ENCODE measurements at regions of chr12 and their contacts with region 1.

Region 1: DNA sequence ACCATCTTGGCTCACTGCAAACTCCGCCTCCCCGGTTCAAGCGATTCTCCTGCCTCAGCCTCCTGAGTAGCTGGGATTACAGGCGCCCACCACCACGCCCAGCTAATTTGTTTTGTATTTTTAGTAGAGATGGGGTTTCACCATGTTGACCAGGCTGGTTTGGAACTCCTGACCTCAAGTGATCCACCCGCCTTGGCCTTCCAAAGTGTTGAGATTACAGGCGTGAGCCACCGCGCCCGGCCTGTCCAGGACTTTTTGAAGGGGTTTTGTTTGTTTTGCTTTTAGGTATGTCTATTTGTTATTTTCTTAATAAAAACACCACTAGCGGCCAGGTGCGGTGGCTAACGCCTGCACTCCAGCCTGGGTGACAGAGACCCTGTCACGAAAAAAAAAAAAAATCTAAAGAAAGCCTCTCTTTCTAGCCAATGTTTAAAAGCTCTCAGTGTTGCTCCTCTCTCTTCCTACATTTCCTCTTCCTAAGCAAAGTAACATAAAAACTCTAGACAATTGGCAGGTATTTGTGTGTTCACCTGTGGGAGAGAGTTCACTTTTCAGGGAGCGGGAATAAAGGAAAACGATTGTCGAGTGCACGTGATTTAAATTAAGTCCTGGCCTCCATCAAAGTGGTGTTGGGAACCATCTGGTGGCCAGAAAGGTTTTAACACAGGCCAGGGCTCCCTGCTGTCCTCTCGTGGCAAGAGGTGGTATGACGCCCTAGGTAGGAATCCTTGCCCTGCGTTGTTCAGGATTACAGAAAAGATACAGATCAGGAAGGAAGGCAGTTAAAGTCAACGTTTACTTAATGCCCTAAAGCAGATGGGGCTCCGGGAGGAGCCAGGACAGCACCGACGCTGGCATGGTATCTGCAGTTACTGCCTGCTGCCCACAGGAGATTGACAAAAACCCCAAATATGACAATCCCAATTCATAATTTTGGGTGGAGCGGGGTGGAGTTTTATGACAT is 36.2 kb upstream of the ATP23 start:
- DNase-seq: peak; percentile 93
- H3K4me3 Mint-ChIP-seq: no peak overlapping the region
- H3K27ac Mint-ChIP-seq: peak overlapping the region; percentile 55
- H3K4me1 Mint-ChIP-seq: peaks cover 7% of the 10 kb centered on the region
- H3K27me3 Mint-ChIP-seq: peaks cover 50% of the 10 kb centered on the region
- CTCF ChIP-seq: peak; percentile 100

Region 2: DNA sequence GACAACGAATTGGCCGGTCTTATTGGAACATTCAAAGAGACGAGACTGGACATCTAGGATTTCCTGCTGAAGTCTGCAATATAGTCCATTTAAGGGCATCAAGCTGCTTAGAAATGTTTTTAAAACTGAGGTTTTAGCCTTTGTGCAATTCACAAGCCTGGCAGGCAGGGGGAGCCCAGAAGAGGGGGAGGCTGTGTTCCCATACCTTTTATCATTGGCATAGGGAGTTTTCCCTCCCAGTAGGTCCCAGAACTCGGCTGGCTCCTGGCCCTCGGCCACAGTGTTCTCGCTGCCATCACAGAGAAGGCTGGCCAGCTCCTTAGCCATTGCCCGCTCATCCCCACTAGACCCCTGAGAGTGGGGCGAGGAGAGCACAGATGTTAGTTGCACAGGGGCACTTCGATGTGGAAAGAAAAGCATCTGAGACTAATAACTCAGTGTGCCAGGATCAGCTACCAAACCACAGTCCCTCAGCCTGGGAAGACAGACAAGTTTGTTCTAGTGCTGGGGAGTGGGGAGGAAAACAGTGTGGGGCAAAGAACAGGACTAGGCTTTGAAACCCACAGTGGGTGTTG is 101.7 kb before region 1 on chr12:
- CTCF ChIA-PET with region 1: interaction called, 3 read pairs
- intact Hi-C with region 1: loop called (anchors 1 kb)
- DNase-seq: peak; percentile 60
- H3K4me3 Mint-ChIP-seq: no peak overlapping the region
- H3K27ac Mint-ChIP-seq: no peak overlapping the region
- H3K4me1 Mint-ChIP-seq: no peaks in the 10 kb centered on the region
- H3K27me3 Mint-ChIP-seq: no peaks in the 10 kb centered on the region
- CTCF ChIP-seq: peak; percentile 84

Region 3: GRCh38 chr12:57836442-57837375 is 68.4 kb before region 1 on chr12:
- CTCF ChIA-PET with region 1: interaction called, 7 read pairs
- intact Hi-C with region 1: loop called (anchors 1 kb)
- DNase-seq: no peak
- H3K4me3 Mint-ChIP-seq: no peak overlapping the region
- H3K27ac Mint-ChIP-seq: no peak overlapping the region
- H3K4me1 Mint-ChIP-seq: peaks cover 41% of the 10 kb centered on the region
- H3K27me3 Mint-ChIP-seq: no peaks in the 10 kb centered on the region
- CTCF ChIP-seq: no peak

Measured in Calu3 (cell line).